AG04449 (cell line): ENCODE measurements at regions of chr4 and their contacts with region 1.

Region 1: GRCh38 chr4:170307182-170307581 is 217.4 kb upstream of the AADAT start:
- DNase-seq: no peak
- H3K4me3 ChIP-seq: no peak overlapping the region
- CTCF ChIP-seq: peak; percentile 1

Region 2: DNA sequence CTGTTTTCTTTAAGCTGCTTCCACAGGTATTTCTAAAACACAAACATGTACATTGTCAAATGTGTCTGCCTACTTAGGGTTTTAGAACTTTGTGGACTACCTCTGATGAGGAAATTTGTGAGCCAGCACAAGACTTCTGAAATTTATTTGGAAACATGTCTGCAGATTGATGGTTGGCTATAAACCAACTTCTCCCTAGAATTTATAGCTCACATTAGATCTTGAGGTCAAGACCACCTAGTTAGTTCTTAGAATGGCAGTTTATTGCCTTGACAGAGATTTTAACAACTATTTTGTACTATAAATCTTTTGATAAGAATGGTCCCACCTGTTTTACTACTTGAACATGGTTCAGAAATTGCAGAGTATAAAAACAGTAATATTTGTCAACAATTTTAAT is 144.8 kb before region 1 on chr4:
- CTCF ChIA-PET with region 1: no interaction called
- POLR2A ChIA-PET with region 1: no interaction called
- DNase-seq: no peak
- H3K4me3 ChIP-seq: no peak overlapping the region
- CTCF ChIP-seq: no peak

Region 3: DNA sequence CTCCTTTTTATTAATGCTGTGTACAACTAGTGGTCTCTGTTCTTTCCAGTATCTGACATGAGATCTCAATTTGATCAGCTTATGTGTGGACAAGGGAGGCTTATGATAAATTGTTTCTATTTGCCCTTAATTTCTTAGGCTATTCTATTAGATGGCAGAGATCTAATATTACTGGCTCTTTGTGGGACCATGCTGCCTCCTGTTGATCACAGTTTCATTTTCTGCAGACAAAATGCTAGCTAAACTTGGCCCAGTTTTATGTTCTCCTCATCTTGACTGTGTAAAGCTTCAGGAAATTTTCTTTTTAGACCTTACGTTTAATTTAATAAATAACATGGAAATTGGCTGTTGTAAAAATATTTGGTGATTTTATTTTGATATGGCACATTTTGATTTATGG is 409.7 kb after region 1 on chr4:
- CTCF ChIA-PET with region 1: interaction called, 16 read pairs
- POLR2A ChIA-PET with region 1: no interaction called
- DNase-seq: no peak
- H3K4me3 ChIP-seq: no peak overlapping the region
- CTCF ChIP-seq: no peak

Region 4: DNA sequence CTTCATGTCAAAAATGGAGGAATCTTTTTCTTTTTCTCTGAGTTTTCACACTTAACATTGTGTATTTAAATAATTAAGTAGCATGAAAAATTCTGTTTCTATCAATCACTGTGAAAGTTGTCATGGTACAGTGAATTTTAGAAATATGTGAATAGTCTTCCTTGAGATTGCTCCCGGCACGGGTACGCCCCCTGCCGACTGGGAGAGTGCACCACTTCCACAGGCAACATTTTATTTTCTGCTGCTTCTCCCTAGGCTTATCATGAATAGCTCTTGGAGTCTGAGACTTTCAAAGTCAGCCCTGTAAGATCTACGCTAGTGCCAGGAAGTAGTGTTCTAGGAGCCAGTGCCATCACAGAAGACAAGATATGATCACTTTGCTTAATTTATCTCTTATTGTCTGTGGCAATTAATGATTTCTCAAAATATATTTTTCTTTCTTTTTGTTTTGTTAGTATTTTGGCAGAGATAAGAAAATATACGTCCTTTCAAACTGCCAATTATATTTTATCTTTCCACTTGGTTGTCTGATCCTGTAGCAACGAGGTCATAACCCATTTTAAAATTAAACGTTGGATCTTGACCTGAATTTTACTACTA is 546.3 kb after region 1 on chr4:
- CTCF ChIA-PET with region 1: interaction called, 14 read pairs
- POLR2A ChIA-PET with region 1: no interaction called
- DNase-seq: no peak
- H3K4me3 ChIP-seq: no peak overlapping the region
- CTCF ChIP-seq: peak; percentile 78